ENCODE measurements at regions of chr15 and their contacts with region 1.

Region 1: GRCh38 chr15:64850775-64851502 is 9.2 kb downstream of the PLEKHO2 start:
- DNase-seq: no peak
- H3K4me3 ChIP-seq: no peak overlapping the region
- H3K27ac ChIP-seq: peak overlapping the region; percentile 44 to 74
- H3K4me1 ChIP-seq: peaks cover 0 to 8% of the 10 kb centered on the region in 2 donors
- H3K27me3 ChIP-seq: no peaks in the 10 kb centered on the region
- CTCF ChIP-seq: no peak
- POLR2A ChIP-seq: no peak

Region 2: DNA sequence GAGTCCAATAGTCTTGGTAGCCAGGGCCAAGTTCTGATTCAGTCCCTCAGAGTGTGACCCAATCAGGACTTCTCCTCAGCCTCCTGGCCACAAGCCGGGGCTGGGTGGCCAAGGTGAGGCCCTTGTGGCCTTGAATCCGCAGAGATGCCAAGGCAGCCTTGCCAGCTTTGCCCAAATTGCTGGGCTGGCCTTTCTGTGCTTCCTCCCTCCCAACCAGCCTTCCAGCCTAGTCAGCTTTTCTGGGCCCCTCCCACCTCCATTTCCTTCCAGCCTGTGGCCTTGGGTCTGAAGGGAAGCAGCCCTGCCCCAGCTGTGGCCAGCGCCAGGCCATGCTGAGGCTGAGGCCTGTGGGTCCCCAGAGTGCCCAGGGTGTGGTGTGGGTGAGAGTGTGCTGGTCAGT is 26.5 kb after region 1 on chr15:
- intact Hi-C with region 1: loop called (anchors 1 kb)
- DNase-seq: no peak
- H3K4me3 ChIP-seq: no peak overlapping the region
- H3K27ac ChIP-seq: peak overlapping the region; percentile 36 to 72
- H3K4me1 ChIP-seq: no peaks in the 10 kb centered on the region
- H3K27me3 ChIP-seq: no peaks in the 10 kb centered on the region
- CTCF ChIP-seq: no peak
- POLR2A ChIP-seq: no peak